ENCODE measurements at regions of chr10 and their contacts with region 1.

Region 1: GRCh38 chr10:84179059-84179710 is 5.6 kb downstream of the GPR15LG start:
- DNase-seq: peak; percentile 100
- H3K4me3 ChIP-seq: no peak overlapping the region
- H3K27ac ChIP-seq: peak overlapping the region; percentile 91
- H3K4me1 ChIP-seq: peaks cover 21% of the 10 kb centered on the region
- H3K27me3 ChIP-seq: no peaks in the 10 kb centered on the region
- CTCF ChIP-seq: no peak

Region 2: GRCh38 chr10:84139126-84140035 is 39.8 kb before region 1 on chr10 and contains the start of gene GHITM:
- CTCF ChIA-PET with region 1: no interaction called
- dilution Hi-C with region 1: no loop called
- in situ Hi-C with region 1: no loop called
- intact Hi-C with region 1: loop called (anchors 1 kb)
- DNase-seq: peak; percentile 97
- H3K4me3 ChIP-seq: peak within 1 kb of the TSS; percentile 79 to 97 (median 96)
- H3K27ac ChIP-seq: peak within 1 kb of the TSS; percentile 95
- H3K4me1 ChIP-seq: peaks cover 14% of the 10 kb centered on the region
- H3K27me3 ChIP-seq: no peaks in the 10 kb centered on the region
- CTCF ChIP-seq: peak; percentile 10 to 51
- total RNA-seq, gene GHITM: 165 to 199 TPM

Region 3: GRCh38 chr10:84194424-84195040 is 15.3 kb after region 1 on chr10 and contains the start of gene CDHR1:
- CTCF ChIA-PET with region 1: no interaction called
- dilution Hi-C with region 1: no loop called
- in situ Hi-C with region 1: no loop called
- intact Hi-C with region 1: loop called (anchors 1 kb)
- DNase-seq: no peak
- H3K4me3 ChIP-seq: peak within 1 kb of the TSS; percentile 6 to 54 (median 51)
- H3K27ac ChIP-seq: no peak within 1 kb of the TSS
- H3K4me1 ChIP-seq: peaks cover 7% of the 10 kb centered on the region
- H3K27me3 ChIP-seq: no peaks in the 10 kb centered on the region
- CTCF ChIP-seq: no peak
- total RNA-seq, gene CDHR1: 8.8 to 27.4 TPM

Region 4: DNA sequence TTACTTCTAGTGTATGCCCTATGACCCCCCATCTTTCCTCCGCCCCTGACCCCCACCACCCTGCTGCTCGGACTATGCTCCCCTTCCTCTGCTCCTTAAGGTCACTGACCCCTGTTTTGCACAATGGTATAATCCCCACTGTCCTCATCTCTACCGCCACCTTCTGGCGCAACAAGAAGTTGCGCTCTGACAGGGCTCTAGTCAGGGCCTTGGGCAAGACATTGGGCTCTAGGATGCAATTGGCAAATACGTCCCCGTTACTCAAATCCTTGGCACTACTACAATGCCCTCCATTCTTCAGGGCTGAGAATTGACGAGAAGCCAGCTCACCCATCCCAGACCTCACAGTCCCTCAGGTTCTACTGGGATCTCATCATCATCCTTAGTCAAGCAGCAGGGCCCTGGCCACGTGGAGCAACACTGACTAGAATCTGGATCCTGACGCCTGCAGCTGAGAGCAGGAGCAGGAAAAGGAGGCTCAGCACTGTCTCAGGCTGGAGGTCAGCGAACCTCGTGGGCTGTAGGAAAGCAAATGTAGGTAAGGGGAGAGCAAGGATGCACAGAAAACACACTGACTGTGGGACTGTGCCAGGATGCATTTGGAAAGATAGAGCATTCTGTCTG is 35.5 kb after region 1 on chr10:
- CTCF ChIA-PET with region 1: interaction called, 15 read pairs
- dilution Hi-C with region 1: no loop called
- in situ Hi-C with region 1: no loop called
- intact Hi-C with region 1: no loop called
- DNase-seq: peak; percentile 26
- H3K4me3 ChIP-seq: no peak overlapping the region
- H3K27ac ChIP-seq: no peak overlapping the region
- H3K4me1 ChIP-seq: no peaks in the 10 kb centered on the region
- H3K27me3 ChIP-seq: no peaks in the 10 kb centered on the region
- CTCF ChIP-seq: peak; percentile 73 to 82

Measured in mammary epithelial cell (primary cell).